ENCODE measurements at regions of chr10 and their contacts with region 1.

Region 1: DNA sequence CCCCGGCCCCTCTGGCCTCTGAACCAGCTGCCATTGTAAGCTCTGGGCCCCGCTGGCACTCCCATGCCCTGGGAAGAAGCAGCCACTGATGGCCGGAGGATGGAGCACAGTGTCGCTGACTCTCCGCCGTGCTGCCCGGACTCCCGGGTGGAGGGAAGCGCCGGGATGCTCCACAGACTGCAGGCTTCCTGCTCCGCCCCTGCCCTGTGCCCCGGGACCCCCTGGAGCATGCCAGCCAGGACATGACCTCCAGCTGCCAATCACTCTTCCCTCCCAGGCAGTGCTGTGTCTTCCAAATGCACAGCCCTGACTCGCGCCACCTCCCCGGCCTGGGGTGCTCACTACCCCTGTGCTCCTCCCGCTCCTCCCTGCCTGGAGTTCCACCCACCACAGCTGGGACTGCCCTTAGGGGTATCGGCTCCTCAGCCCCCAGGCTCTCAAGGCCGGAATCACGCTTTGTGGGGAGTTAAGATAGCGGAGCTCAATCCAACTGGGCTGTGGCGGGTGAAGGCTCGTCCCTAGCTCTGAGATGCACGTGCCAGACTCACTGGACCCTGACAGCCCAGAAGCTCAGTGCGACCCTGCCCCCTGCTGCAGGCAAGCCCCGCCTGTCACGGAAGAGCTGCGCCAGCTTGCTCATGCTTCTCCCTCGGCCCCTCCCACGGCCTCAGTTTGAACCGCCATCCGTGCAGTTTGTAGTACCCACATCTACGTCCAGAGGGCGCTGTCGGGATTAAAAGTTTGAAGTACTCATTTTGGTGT is 142.3 kb upstream of the TCERG1L start:
- DNase-seq: peak; percentile 51 to 99
- H3K4me3 ChIP-seq: peak overlapping the region; percentile 24 to 57 (median 33)
- H3K27ac ChIP-seq: no peak overlapping the region
- H3K4me1 ChIP-seq: peaks cover 0 to 17% (median 12%) of the 10 kb centered on the region in 4 experiments; a peak in 6 of 7 replicates
- H3K27me3 ChIP-seq: peaks cover 0 to 7% (median 0%) of the 10 kb centered on the region in 4 experiments; a peak in 3 of 7 replicates
- CTCF ChIP-seq: peak; percentile 60 to 80 (median 67)
- EP300 ChIP-seq: no peak
- POLR2A ChIP-seq: no peak; a peak in 1 of 3 replicates
- RAD21 ChIP-seq: peak; percentile 49 to 62

Region 2: GRCh38 chr10:131359796-131360195 is 94.0 kb before region 1 on chr10:
- CTCF ChIA-PET with region 1: interaction called, 21 read pairs
- POLR2A ChIA-PET with region 1: no interaction called
- DNase-seq: no peak
- H3K4me3 ChIP-seq: no peak overlapping the region
- H3K27ac ChIP-seq: no peak overlapping the region
- H3K4me1 ChIP-seq: peaks cover 0 to 2% (median 0%) of the 10 kb centered on the region in 4 experiments; a peak in 3 of 7 replicates
- H3K27me3 ChIP-seq: no peaks in the 10 kb centered on the region; a peak in 1 of 7 replicates
- CTCF ChIP-seq: no peak
- EP300 ChIP-seq: no peak
- POLR2A ChIP-seq: no peak
- RAD21 ChIP-seq: 0 out of 4 replicates have a peak, but pooled peaks of 1 of the 2 experiments have one; percentile 9

Region 3: DNA sequence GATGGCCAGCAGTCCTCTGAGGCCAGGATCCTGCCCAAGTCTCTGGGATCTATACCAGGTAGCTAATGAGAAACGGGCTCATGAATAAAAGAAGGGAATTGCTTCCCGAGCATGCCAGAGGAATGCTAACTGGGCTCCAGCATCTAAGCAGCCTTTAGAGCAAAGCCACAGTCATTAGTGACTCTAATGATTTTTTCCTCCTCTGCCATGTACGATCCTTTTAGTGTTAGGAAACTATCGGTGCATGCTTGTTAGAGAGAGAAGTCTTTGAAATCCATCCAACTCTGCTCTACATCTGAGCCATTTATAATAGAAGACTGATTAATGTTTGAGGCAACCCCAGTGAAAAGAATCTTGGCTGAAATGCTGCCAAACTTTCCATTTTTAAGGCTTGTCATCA is 17.3 kb before region 1 on chr10:
- CTCF ChIA-PET with region 1: interaction called, 21 read pairs
- POLR2A ChIA-PET with region 1: interaction called, 3 read pairs
- DNase-seq: no peak
- H3K4me3 ChIP-seq: no peak overlapping the region
- H3K27ac ChIP-seq: no peak overlapping the region
- H3K4me1 ChIP-seq: peaks cover 0 to 2% (median 0%) of the 10 kb centered on the region in 4 experiments; a peak in 1 of 7 replicates
- H3K27me3 ChIP-seq: no peaks in the 10 kb centered on the region
- CTCF ChIP-seq: no peak
- EP300 ChIP-seq: no peak
- POLR2A ChIP-seq: no peak
- RAD21 ChIP-seq: no peak

Region 4: DNA sequence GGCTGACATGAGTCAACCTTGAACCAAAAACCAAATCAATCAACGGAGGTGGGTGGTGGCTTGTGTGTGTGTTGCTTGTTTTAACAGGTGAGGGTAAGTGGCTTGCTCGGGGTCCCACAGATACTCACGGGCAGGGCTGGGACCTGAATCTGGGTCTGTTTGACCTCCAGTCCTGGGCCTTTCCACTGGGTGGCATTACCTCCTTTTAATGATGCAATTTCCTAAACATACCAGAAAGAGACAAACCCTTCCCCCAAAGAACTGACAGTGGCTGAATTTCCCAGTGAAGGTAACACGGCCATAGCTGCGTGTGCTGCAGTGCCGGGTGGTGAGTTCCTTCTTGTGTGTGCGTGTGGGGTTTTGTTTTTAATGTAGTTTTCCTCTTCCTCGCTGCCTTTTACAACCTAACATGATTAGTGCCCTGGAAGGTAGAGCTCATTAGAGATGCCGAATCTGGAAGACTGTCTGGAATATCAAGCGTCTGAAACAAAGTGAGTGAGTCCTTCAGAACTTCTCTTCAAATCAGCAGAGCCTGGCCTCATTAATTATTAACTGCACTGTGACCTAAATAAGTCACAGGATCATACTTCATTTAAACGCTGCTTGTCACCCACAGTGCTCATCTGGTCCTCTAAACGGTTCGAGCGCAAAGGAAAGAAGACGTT is 23.8 kb after region 1 on chr10:
- CTCF ChIA-PET with region 1: interaction called, 16 read pairs
- POLR2A ChIA-PET with region 1: no interaction called
- DNase-seq: no peak
- H3K4me3 ChIP-seq: no peak overlapping the region
- H3K27ac ChIP-seq: no peak overlapping the region
- H3K4me1 ChIP-seq: no peaks in the 10 kb centered on the region; a peak in 1 of 7 replicates
- H3K27me3 ChIP-seq: no peaks in the 10 kb centered on the region; a peak in 1 of 7 replicates
- CTCF ChIP-seq: peak in 1 of 3 experiments; percentile 12; a peak in 1 of 4 replicates
- EP300 ChIP-seq: no peak
- POLR2A ChIP-seq: no peak
- RAD21 ChIP-seq: peak; percentile 26 to 47; a peak in 3 of 4 replicates

Region 5: DNA sequence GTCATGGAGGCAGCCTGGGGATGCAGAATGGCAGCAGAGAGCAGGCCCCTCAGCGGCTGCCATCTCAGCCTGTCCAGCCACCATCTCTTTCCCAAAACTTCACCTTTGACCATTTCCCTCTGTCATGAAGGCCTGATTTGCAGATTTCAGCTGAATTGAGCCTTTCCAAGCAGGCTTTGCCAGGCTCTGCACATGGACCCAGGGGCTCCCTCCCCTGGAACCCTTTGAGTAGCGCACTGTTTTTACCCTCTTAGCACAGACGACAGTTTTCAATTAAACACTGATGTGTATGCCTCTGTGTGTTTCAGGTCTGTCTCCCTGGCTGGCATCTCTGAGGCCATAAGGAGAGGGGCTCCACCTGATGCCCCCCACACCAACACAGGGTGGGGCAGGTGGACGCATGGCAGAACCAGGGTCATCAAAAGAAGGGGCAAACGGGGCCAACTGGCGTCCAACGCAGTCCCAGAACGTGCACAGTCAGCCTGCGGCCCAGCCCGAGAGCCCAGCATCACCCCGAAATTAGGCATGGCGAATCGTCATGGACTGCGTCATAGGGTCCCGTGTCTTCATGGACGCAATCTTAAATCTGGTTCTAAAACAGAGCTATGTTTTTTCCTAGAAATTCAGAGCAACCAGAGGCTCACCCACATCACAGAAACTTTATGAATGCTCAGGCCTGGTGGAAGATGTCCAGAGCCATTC is 42.7 kb after region 1 on chr10:
- CTCF ChIA-PET with region 1: interaction called, 10 read pairs
- POLR2A ChIA-PET with region 1: no interaction called
- DNase-seq: no peak
- H3K4me3 ChIP-seq: no peak overlapping the region
- H3K27ac ChIP-seq: no peak overlapping the region
- H3K4me1 ChIP-seq: no peaks in the 10 kb centered on the region
- H3K27me3 ChIP-seq: no peaks in the 10 kb centered on the region
- CTCF ChIP-seq: peak; percentile 29 to 66 (median 59)
- EP300 ChIP-seq: no peak
- POLR2A ChIP-seq: no peak
- RAD21 ChIP-seq: peak; percentile 59 to 68

Region 6: GRCh38 chr10:131531265-131532190 is 77.8 kb after region 1 on chr10:
- CTCF ChIA-PET with region 1: no interaction called
- POLR2A ChIA-PET with region 1: no interaction called
- DNase-seq: no peak
- H3K4me3 ChIP-seq: no peak overlapping the region
- H3K27ac ChIP-seq: no peak overlapping the region
- H3K4me1 ChIP-seq: no peaks in the 10 kb centered on the region
- H3K27me3 ChIP-seq: no peaks in the 10 kb centered on the region
- CTCF ChIP-seq: no peak
- EP300 ChIP-seq: no peak
- POLR2A ChIP-seq: no peak
- RAD21 ChIP-seq: no peak

Region 7: GRCh38 chr10:131569851-131570715 is 116.3 kb after region 1 on chr10:
- CTCF ChIA-PET with region 1: interaction called, 11 read pairs
- POLR2A ChIA-PET with region 1: no interaction called
- DNase-seq: peak; percentile 31 to 94
- H3K4me3 ChIP-seq: no peak overlapping the region
- H3K27ac ChIP-seq: no peak overlapping the region
- H3K4me1 ChIP-seq: no peaks in the 10 kb centered on the region; a peak in 1 of 7 replicates
- H3K27me3 ChIP-seq: no peaks in the 10 kb centered on the region
- CTCF ChIP-seq: peak; percentile 87 to 97 (median 93)
- EP300 ChIP-seq: no peak
- POLR2A ChIP-seq: no peak
- RAD21 ChIP-seq: peak; percentile 93 to 95

Measured in H1 (cell line).